ENCODE measurements at regions of chr16 and their contacts with region 1.

Region 1: GRCh38 chr16:88194397-88195268 is 188.1 kb upstream of the ZNF469 start:
- DNase-seq: no peak
- H3K4me3 ChIP-seq: no peak overlapping the region
- H3K27ac ChIP-seq: no peak overlapping the region
- H3K4me1 ChIP-seq: no peaks in the 10 kb centered on the region
- H3K27me3 ChIP-seq: no peaks in the 10 kb centered on the region
- CTCF ChIP-seq: 0 out of 2 replicates have a peak, but pooled peaks have one; percentile 11

Region 2: GRCh38 chr16:88383401-88384221 is 189.0 kb after region 1 on chr16:
- CTCF ChIA-PET with region 1: no interaction called
- POLR2A ChIA-PET with region 1: interaction called, 5 read pairs
- intact Hi-C with region 1: loop called (anchors 10 kb)
- DNase-seq: peak in 1 of 2 experiments; percentile 63
- H3K4me3 ChIP-seq: peak overlapping the region; percentile 60
- H3K27ac ChIP-seq: no peak overlapping the region
- H3K4me1 ChIP-seq: peaks cover 22% of the 10 kb centered on the region
- H3K27me3 ChIP-seq: peaks cover 5% of the 10 kb centered on the region; the same call in 1 of the 2 replicates
- CTCF ChIP-seq: peak; percentile 62

Measured in PC-9 (cell line).